ENCODE measurements at regions of chr1 and their contacts with region 1.

Region 1: DNA sequence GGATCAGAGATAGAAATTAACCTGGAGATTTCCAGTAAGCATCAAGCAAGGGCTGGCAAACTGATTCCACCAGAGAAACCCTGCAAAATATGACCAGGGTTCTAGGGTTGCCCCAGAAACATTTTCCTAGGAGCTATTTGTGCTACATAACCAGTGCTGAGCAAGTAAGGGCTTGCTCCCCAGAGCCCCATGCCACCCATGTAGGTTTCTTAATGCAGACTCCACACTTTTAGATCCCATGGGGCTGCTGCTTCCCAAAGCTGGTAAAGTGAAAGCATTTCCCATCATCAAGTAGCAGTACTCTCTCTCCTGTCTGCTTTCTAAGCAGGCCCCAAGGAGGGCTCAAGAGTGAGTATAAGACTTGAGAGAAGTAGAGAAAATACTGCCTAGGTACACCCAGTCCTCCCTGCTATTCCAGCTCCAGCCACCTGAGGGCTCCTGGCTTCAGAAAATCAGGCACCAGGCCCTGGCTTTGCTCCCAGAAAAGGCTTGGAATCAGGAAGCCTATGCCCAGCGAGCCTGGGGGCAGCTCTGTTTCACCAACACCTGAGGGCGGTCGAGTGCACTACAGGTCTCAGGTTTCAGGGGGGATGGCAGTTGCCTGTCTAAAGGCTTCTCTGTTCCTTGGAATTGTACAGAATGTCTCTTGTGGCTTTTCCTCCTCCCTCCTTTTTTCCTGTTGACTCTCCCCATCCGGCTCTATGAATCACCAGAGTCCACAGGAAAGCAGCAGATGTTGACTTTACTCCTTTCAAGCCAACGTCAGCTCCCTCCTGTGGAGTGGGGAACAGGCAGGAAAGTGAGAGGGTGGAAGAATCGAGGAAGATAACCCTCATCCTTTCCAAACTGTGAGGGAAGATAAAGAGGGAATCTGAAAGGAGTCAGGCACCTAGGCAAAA is 6.2 kb upstream of the ANKRD35 start:
- DNase-seq: peak; percentile 99
- H3K4me3 ChIP-seq: peak overlapping the region in 1 of 3 experiments; percentile 6
- H3K27ac ChIP-seq: peak overlapping the region; percentile 95
- H3K4me1 ChIP-seq: peaks cover 31% of the 10 kb centered on the region
- H3K27me3 ChIP-seq: no peaks in the 10 kb centered on the region
- CTCF ChIP-seq: peak; percentile 91 to 99
- POLR2A ChIP-seq: peak; percentile 71

Region 2: DNA sequence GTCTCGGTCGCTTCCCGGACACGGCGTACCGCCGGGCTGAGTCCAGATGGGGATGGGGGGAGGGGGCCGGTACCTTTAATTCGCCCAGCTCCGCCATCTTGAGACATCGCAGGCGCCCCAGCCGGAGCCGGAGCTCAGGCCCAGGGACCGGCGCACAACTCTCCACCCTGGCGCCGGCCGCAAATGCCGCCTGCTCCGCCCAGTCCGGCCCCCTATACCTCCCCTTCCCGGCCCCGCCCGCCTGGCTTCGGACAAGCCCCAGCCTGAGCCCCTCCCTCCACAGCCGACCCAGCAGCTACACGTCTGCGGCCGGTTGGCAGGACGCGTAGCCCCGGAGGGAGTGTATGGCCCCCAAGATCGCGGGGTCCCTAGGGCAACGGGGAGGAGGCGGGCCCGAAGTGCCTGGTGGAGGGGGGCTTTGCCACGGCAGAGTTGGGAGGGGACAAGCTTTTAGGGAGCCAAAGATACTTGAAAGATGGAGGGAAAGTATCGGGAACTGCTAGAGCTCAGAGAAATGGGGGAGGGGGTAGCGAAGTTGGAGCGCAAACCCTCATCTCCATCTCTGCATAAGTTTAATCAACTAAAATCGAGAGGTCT is 32.8 kb before region 1 on chr1 and contains the start of gene PIAS3:
- CTCF ChIA-PET with region 1: interaction called, 53 read pairs
- POLR2A ChIA-PET with region 1: interaction called, 28 read pairs
- dilution Hi-C with region 1: no loop called
- intact Hi-C with region 1: loop called (anchors 1 kb)
- DNase-seq: peak; percentile 97
- H3K4me3 ChIP-seq: peak within 1 kb of the TSS; percentile 64 to 78 (median 71)
- H3K27ac ChIP-seq: peak within 1 kb of the TSS; percentile 43
- H3K4me1 ChIP-seq: peaks cover 7% of the 10 kb centered on the region
- H3K27me3 ChIP-seq: peaks cover 2 to 4% of the 10 kb centered on the region in 2 experiments
- CTCF ChIP-seq: no peak
- POLR2A ChIP-seq: no peak
- total RNA-seq, gene PIAS3: 50.1 and 53.3 TPM in 2 replicates

Region 3: DNA sequence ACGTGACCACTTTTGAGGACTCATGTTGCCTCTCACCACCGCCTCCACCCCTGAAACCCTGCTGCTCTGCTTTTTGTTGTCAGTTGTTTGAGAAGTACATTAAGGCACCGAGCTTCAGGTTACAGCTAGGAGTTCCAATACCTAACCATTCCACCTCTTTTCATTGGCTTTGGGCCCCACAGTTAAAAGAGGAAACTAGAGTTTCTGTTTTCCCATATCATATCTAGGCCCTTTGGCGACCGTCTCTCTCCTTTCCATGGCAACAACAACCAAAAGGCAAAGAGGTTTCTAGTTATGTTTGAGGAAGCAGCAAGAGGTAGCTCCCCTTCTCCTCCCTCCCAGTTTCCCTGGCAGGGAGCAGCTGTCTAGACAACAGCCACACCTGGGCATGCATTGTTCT is 12.1 kb before region 1 on chr1:
- CTCF ChIA-PET with region 1: interaction called, 16 read pairs
- POLR2A ChIA-PET with region 1: no interaction called
- dilution Hi-C with region 1: no loop called
- intact Hi-C with region 1: no loop called
- DNase-seq: no peak
- H3K4me3 ChIP-seq: no peak overlapping the region
- H3K27ac ChIP-seq: no peak overlapping the region
- H3K4me1 ChIP-seq: peaks cover 6% of the 10 kb centered on the region
- H3K27me3 ChIP-seq: peaks cover 2 to 3% of the 10 kb centered on the region in 2 experiments
- CTCF ChIP-seq: no peak
- POLR2A ChIP-seq: no peak

Region 4: GRCh38 chr1:145918144-145918992 is 26.5 kb after region 1 on chr1 and contains the start of gene PEX11B:
- CTCF ChIA-PET with region 1: interaction called, 37 read pairs
- POLR2A ChIA-PET with region 1: interaction called, 6 read pairs
- dilution Hi-C with region 1: no loop called
- intact Hi-C with region 1: no loop called
- DNase-seq: peak; percentile 96
- H3K4me3 ChIP-seq: peak within 1 kb of the TSS; percentile 45 to 77 (median 62)
- H3K27ac ChIP-seq: peak within 1 kb of the TSS; percentile 19
- H3K4me1 ChIP-seq: peaks cover 16% of the 10 kb centered on the region
- H3K27me3 ChIP-seq: no peaks in the 10 kb centered on the region
- CTCF ChIP-seq: no peak
- POLR2A ChIP-seq: peak; percentile 63
- total RNA-seq, gene PEX11B: 29.0 and 30.5 TPM in 2 replicates

Region 5: GRCh38 chr1:145957443-145958319 is 65.8 kb after region 1 on chr1 and contains the start of gene LIX1L:
- CTCF ChIA-PET with region 1: interaction called, 22 read pairs
- POLR2A ChIA-PET with region 1: interaction called, 6 read pairs
- dilution Hi-C with region 1: no loop called
- intact Hi-C with region 1: loop called (anchors 1 kb)
- DNase-seq: peak; percentile 97
- H3K4me3 ChIP-seq: peak within 1 kb of the TSS; percentile 71 to 87 (median 74)
- H3K27ac ChIP-seq: peak within 1 kb of the TSS; percentile 96
- H3K4me1 ChIP-seq: peaks cover 50% of the 10 kb centered on the region
- H3K27me3 ChIP-seq: no peaks in the 10 kb centered on the region
- CTCF ChIP-seq: no peak
- POLR2A ChIP-seq: peak; percentile 98
- total RNA-seq, gene LIX1L: 54.9 and 55.6 TPM in 2 replicates

Region 6: GRCh38 chr1:145978854-145979759 is 87.3 kb after region 1 on chr1:
- CTCF ChIA-PET with region 1: interaction called, 15 read pairs
- POLR2A ChIA-PET with region 1: no interaction called
- dilution Hi-C with region 1: no loop called
- intact Hi-C with region 1: loop called (anchors 1 kb)
- DNase-seq: peak; percentile 98
- H3K4me3 ChIP-seq: peak overlapping the region in 1 of 3 experiments; percentile 37
- H3K27ac ChIP-seq: peak overlapping the region; percentile 89
- H3K4me1 ChIP-seq: peaks cover 40% of the 10 kb centered on the region
- H3K27me3 ChIP-seq: no peaks in the 10 kb centered on the region
- CTCF ChIP-seq: no peak
- POLR2A ChIP-seq: peak; percentile 52

Region 7: DNA sequence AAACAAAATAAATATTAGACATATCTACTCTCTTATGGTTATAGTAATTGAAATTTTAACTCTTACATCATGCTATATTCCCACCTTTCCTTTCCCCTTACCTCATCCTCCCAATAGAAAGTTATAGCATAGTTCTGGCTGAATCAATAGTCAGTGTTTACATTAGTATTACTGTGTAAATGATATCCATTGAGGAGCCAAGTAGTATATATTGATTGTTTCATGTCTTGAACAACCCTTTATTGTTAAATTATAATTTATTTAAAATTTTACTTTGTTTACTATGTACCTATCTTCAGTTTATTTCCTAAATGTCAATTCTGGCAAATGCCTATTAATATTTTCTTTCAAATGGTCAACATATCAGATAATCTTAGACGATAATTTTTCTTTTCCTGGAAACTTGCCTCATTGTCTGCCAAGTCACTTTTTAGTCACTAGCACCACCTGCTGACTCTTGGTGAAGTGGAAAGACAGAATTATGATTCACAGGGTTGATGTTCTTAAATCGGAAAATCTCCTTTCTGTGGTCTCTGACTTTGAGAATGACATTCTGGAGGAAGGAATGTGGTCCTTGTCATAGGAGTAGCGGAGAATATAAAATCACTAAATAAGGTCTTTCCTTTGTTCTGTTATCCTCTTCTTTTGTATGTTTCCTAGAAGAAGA is 121.0 kb after region 1 on chr1:
- CTCF ChIA-PET with region 1: interaction called, 4 read pairs
- POLR2A ChIA-PET with region 1: no interaction called
- dilution Hi-C with region 1: no loop called
- intact Hi-C with region 1: loop called (anchors 1 kb)
- DNase-seq: peak; percentile 84
- H3K4me3 ChIP-seq: no peak overlapping the region
- H3K27ac ChIP-seq: no peak overlapping the region
- H3K4me1 ChIP-seq: peaks cover 4% of the 10 kb centered on the region
- H3K27me3 ChIP-seq: peaks cover 6 to 9% of the 10 kb centered on the region in 2 experiments
- CTCF ChIP-seq: peak; percentile 52 to 60
- POLR2A ChIP-seq: no peak